Esophagus muscularis mucosa (tissue), 4 donors: ENCODE measurements at regions of chrX and their contacts with region 1.

Region 1: DNA sequence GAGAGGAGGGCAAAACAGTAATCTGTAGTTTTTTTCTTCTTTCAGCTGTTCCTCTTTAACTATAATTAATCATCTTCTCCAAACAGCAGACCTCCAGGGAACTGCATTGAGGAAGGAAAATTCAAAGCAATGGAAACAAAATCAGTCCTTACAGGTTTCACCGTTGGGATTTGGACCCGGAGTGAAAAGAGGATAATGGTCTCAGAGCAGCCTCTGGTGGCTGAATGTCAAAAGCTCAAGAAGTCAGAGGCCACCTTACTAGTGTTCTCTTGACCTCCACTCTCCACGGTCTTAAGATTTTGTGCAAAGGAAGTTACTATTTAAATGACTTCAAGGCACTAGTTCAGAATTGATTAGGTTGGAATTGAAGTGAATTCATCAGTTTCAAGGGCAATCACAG is 16.0 kb upstream of the MID1 start:
- DNase-seq: no peak
- H3K4me3 ChIP-seq: peak overlapping the region in 1 of 4 donors; percentile 20
- H3K27ac ChIP-seq: peak overlapping the region; percentile 36 to 55 (median 48)
- H3K4me1 ChIP-seq: peaks cover 0 to 27% (median 19%) of the 10 kb centered on the region in 4 donors
- H3K27me3 ChIP-seq: no peaks in the 10 kb centered on the region
- CTCF ChIP-seq: peak; percentile 44 to 63 (median 58)
- EP300 ChIP-seq: no peak
- POLR2A ChIP-seq: no peak

Region 2: DNA sequence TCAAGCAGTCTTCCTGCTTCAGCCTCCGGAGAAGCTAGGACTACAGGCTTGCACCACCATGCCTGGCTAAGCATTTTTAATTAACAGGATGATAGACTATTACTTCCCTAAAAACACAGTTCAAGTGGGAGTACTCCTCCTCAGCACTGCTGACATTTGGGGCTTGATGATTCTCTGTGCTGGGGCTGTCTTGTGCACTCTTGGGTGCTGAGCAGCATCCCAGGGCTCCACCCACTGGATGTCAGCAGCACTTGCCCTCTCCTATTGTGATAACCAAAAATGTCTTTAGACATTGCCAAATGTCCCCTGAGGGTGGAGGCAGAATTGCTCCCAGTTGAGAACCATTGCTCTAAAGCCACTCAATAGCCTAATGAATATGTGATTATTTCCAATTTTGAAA is 419.1 kb before region 1 on chrX:
- intact Hi-C with region 1: no loop called
- DNase-seq: no peak
- H3K4me3 ChIP-seq: no peak overlapping the region
- H3K27ac ChIP-seq: no peak overlapping the region
- H3K4me1 ChIP-seq: no peaks in the 10 kb centered on the region
- H3K27me3 ChIP-seq: no peaks in the 10 kb centered on the region
- CTCF ChIP-seq: no peak
- EP300 ChIP-seq: no peak
- POLR2A ChIP-seq: no peak

Region 3: GRCh38 chrX:10296576-10296975 is 339.8 kb before region 1 on chrX:
- intact Hi-C with region 1: no loop called
- DNase-seq: no peak
- H3K4me3 ChIP-seq: no peak overlapping the region
- H3K27ac ChIP-seq: no peak overlapping the region
- H3K4me1 ChIP-seq: no peaks in the 10 kb centered on the region
- H3K27me3 ChIP-seq: no peaks in the 10 kb centered on the region
- CTCF ChIP-seq: no peak
- EP300 ChIP-seq: no peak
- POLR2A ChIP-seq: no peak

Region 4: GRCh38 chrX:10722851-10723250 is 86.5 kb after region 1 on chrX:
- intact Hi-C with region 1: loop called (anchors 10 kb)
- DNase-seq: no peak
- H3K4me3 ChIP-seq: no peak overlapping the region
- H3K27ac ChIP-seq: peak overlapping the region in 2 of 4 donors; percentile 35 to 58
- H3K4me1 ChIP-seq: peaks cover 0 to 8% (median 0%) of the 10 kb centered on the region in 4 donors
- H3K27me3 ChIP-seq: no peaks in the 10 kb centered on the region
- CTCF ChIP-seq: peak; percentile 71 to 78 (median 71)
- EP300 ChIP-seq: no peak
- POLR2A ChIP-seq: no peak